Transverse colon (tissue), 4 donors: ENCODE measurements at regions of chr4 and their contacts with region 1.

Region 1: GRCh38 chr4:109815151-109816081 is at the start of gene GAR1:
- DNase-seq: peak; percentile 95
- H3K4me3 ChIP-seq: peak within 1 kb of the TSS; percentile 40 to 77 (median 66)
- H3K27ac ChIP-seq: peak within 1 kb of the TSS; percentile 78 to 91 (median 86)
- H3K4me1 ChIP-seq: peaks cover 9 to 30% (median 21%) of the 10 kb centered on the region in 4 donors
- H3K27me3 ChIP-seq: no peaks in the 10 kb centered on the region
- CTCF ChIP-seq: no peak
- EP300 ChIP-seq: peak; percentile 26
- POLR2A ChIP-seq: peak; percentile 87
- total RNA-seq, gene GAR1: 1.9 to 8.3 (median 5.3) TPM in 3 of 4 donors, not detected in the other

Region 2: GRCh38 chr4:108649863-108650211 is 1165.6 kb before region 1 on chr4:
- in situ Hi-C with region 1: loop called in 1 of 4 experiments (anchors 25 kb)
- intact Hi-C with region 1: no loop called
- DNase-seq: no peak
- H3K4me3 ChIP-seq: peak overlapping the region in 3 of 4 donors; percentile 62 to 88 (median 70)
- H3K27ac ChIP-seq: peak overlapping the region; percentile 84 to 93 (median 90)
- H3K4me1 ChIP-seq: peaks cover 8 to 24% (median 10%) of the 10 kb centered on the region in 4 donors
- H3K27me3 ChIP-seq: no peaks in the 10 kb centered on the region
- CTCF ChIP-seq: no peak
- EP300 ChIP-seq: no peak
- POLR2A ChIP-seq: no peak

Region 3: DNA sequence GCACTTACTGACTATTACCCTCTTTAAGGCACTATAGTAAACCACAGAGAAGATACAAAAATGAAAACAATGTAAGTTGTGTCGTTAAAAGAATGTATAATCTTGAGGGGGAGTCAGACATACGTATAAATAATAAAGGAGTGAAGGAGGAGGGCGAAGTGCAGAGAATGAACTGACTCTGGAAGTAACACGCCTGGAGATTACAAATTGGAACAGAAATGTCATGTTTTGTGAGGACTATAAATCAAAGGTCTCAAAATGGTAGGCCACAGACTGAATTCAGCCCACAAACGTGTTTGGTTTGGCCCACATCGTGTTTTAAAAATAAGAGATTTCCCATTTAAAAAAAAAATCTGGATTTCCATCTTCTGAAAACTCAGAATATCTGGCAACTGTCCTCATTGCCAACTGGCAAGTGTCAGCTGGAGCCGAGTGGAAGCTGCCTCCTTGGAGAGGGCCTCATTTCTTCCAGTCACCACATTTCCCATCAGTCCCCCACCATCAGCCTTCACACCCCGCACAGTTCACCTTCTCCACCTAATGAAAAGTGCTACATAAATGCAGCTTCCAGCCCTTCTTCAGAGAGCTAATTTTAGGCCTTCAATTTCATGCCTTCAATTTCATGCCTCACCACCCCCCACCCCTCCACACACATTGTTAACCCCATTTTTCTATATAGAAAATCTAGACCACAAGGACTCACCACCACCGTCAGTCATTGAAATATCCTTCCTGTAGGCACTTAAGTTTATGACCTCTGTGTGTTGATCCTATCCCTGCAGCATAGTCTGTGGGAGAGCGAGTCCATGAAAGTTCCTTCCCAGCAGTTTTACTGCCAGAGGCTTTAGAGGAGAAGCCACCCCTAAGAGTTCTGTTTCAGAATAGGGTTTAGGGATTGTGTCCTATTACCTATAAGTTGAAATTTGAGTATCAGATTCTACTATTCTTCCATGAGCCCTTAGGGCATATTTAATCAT is 481.0 kb before region 1 on chr4:
- in situ Hi-C with region 1: no loop called
- intact Hi-C with region 1: no loop called
- DNase-seq: no peak
- H3K4me3 ChIP-seq: no peak overlapping the region
- H3K27ac ChIP-seq: no peak overlapping the region
- H3K4me1 ChIP-seq: no peaks in the 10 kb centered on the region
- H3K27me3 ChIP-seq: no peaks in the 10 kb centered on the region
- CTCF ChIP-seq: no peak
- EP300 ChIP-seq: no peak
- POLR2A ChIP-seq: no peak

Region 4: GRCh38 chr4:109424093-109424841 is 391.1 kb before region 1 on chr4:
- in situ Hi-C with region 1: loop called in 2 of 4 experiments (anchors 5 to 10 kb)
- intact Hi-C with region 1: loop called (anchors 10 kb)
- DNase-seq: no peak
- H3K4me3 ChIP-seq: no peak overlapping the region
- H3K27ac ChIP-seq: no peak overlapping the region
- H3K4me1 ChIP-seq: peaks cover 0 to 3% (median 0%) of the 10 kb centered on the region in 4 donors
- H3K27me3 ChIP-seq: no peaks in the 10 kb centered on the region
- CTCF ChIP-seq: no peak
- EP300 ChIP-seq: no peak
- POLR2A ChIP-seq: no peak

Region 5: GRCh38 chr4:109548655-109549054 is 266.8 kb before region 1 on chr4:
- in situ Hi-C with region 1: loop called in 2 of 4 experiments (anchors 25 kb)
- intact Hi-C with region 1: no loop called
- DNase-seq: no peak
- H3K4me3 ChIP-seq: no peak overlapping the region
- H3K27ac ChIP-seq: no peak overlapping the region
- H3K4me1 ChIP-seq: no peaks in the 10 kb centered on the region
- H3K27me3 ChIP-seq: no peaks in the 10 kb centered on the region
- CTCF ChIP-seq: no peak
- EP300 ChIP-seq: no peak
- POLR2A ChIP-seq: no peak

Region 6: GRCh38 chr4:109559983-109560686 is 255.3 kb before region 1 on chr4 and contains the start of gene MCUB:
- in situ Hi-C with region 1: loop called in 1 of 4 experiments (anchors 25 kb)
- intact Hi-C with region 1: no loop called
- DNase-seq: peak; percentile 89
- H3K4me3 ChIP-seq: peak within 1 kb of the TSS; percentile 66 to 82 (median 70)
- H3K27ac ChIP-seq: peak within 1 kb of the TSS; percentile 86 to 89 (median 88)
- H3K4me1 ChIP-seq: peaks cover 0 to 22% (median 4%) of the 10 kb centered on the region in 4 donors
- H3K27me3 ChIP-seq: no peaks in the 10 kb centered on the region
- CTCF ChIP-seq: no peak
- EP300 ChIP-seq: no peak
- POLR2A ChIP-seq: peak; percentile 44
- total RNA-seq, gene MCUB: 4.6 to 15.7 (median 8.8) TPM

Region 7: GRCh38 chr4:109702950-109703663 is 112.3 kb before region 1 on chr4 and contains the start of gene CASP6:
- in situ Hi-C with region 1: loop called in 2 of 4 experiments (anchors 25 kb)
- intact Hi-C with region 1: loop called (anchors 10 kb)
- DNase-seq: peak; percentile 93
- H3K4me3 ChIP-seq: peak within 1 kb of the TSS; percentile 57 to 83 (median 71)
- H3K27ac ChIP-seq: peak within 1 kb of the TSS; percentile 91 to 95 (median 93)
- H3K4me1 ChIP-seq: peaks cover 6 to 52% (median 28%) of the 10 kb centered on the region in 4 donors
- H3K27me3 ChIP-seq: no peaks in the 10 kb centered on the region
- CTCF ChIP-seq: peak; percentile 69 to 88 (median 81)
- EP300 ChIP-seq: no peak
- POLR2A ChIP-seq: peak; percentile 87
- total RNA-seq, gene CASP6: 34.4 to 87.7 (median 58.9) TPM

Region 8: GRCh38 chr4:109729718-109730618 is 85.4 kb before region 1 on chr4 and contains the start of gene PLA2G12A:
- in situ Hi-C with region 1: loop called in 1 of 4 experiments (anchors 10 kb)
- intact Hi-C with region 1: no loop called
- DNase-seq: peak; percentile 89
- H3K4me3 ChIP-seq: peak within 1 kb of the TSS; percentile 58 to 87 (median 72)
- H3K27ac ChIP-seq: peak within 1 kb of the TSS; percentile 90 to 94 (median 90)
- H3K4me1 ChIP-seq: peaks cover 5 to 23% (median 13%) of the 10 kb centered on the region in 4 donors
- H3K27me3 ChIP-seq: no peaks in the 10 kb centered on the region
- CTCF ChIP-seq: no peak
- EP300 ChIP-seq: no peak
- POLR2A ChIP-seq: peak; percentile 78
- total RNA-seq, gene PLA2G12A: 17.3 to 42.6 (median 29.7) TPM